ENCODE measurements at regions of chr7 and their contacts with region 1.

Region 1: GRCh38 chr7:101287032-101287431 is 34.6 kb downstream of the IFT22 start:
- DNase-seq: no peak
- H3K4me3 ChIP-seq: no peak overlapping the region
- H3K27ac ChIP-seq: no peak overlapping the region
- H3K4me1 ChIP-seq: peaks cover 0 to 21% (median 8%) of the 10 kb centered on the region in 4 experiments; a peak in 6 of 7 replicates
- H3K27me3 ChIP-seq: no peaks in the 10 kb centered on the region
- CTCF ChIP-seq: no peak
- EP300 ChIP-seq: no peak
- POLR2A ChIP-seq: no peak
- RAD21 ChIP-seq: no peak

Region 2: GRCh38 chr7:101138213-101138870 is 148.7 kb before region 1 on chr7:
- CTCF ChIA-PET with region 1: interaction called, 26 read pairs
- POLR2A ChIA-PET with region 1: no interaction called
- DNase-seq: peak in 1 of 2 experiments; percentile 80
- H3K4me3 ChIP-seq: peak overlapping the region in 1 of 4 experiments; percentile 29; a peak in 2 of 8 replicates
- H3K27ac ChIP-seq: no peak overlapping the region
- H3K4me1 ChIP-seq: peaks cover 2 to 14% (median 6%) of the 10 kb centered on the region in 4 experiments; a peak in 6 of 7 replicates
- H3K27me3 ChIP-seq: peaks cover 0 to 2% (median 0%) of the 10 kb centered on the region in 4 experiments; a peak in 1 of 7 replicates
- CTCF ChIP-seq: peak; percentile 57 to 76 (median 64)
- EP300 ChIP-seq: no peak
- POLR2A ChIP-seq: no peak
- RAD21 ChIP-seq: peak; percentile 60 to 69

Region 3: GRCh38 chr7:101226721-101227120 is 60.3 kb before region 1 on chr7:
- CTCF ChIA-PET with region 1: interaction called, 51 read pairs
- POLR2A ChIA-PET with region 1: no interaction called
- DNase-seq: no peak
- H3K4me3 ChIP-seq: no peak overlapping the region
- H3K27ac ChIP-seq: no peak overlapping the region
- H3K4me1 ChIP-seq: peaks cover 0 to 11% (median 1%) of the 10 kb centered on the region in 4 experiments; a peak in 4 of 7 replicates
- H3K27me3 ChIP-seq: no peaks in the 10 kb centered on the region
- CTCF ChIP-seq: no peak
- EP300 ChIP-seq: no peak
- POLR2A ChIP-seq: no peak
- RAD21 ChIP-seq: no peak

Region 4: GRCh38 chr7:101244375-101245146 is 42.5 kb before region 1 on chr7 and contains the start of gene FIS1:
- CTCF ChIA-PET with region 1: interaction called, 46 read pairs
- POLR2A ChIA-PET with region 1: interaction called, 11 read pairs
- DNase-seq: peak; percentile 76 to 98
- H3K4me3 ChIP-seq: peak within 1 kb of the TSS; percentile 80 to 99 (median 98)
- H3K27ac ChIP-seq: peak within 1 kb of the TSS; percentile 61; the same call in 1 of the 2 replicates
- H3K4me1 ChIP-seq: peaks cover 0 to 6% (median 3%) of the 10 kb centered on the region in 4 experiments; a peak in 5 of 7 replicates
- H3K27me3 ChIP-seq: no peaks in the 10 kb centered on the region
- CTCF ChIP-seq: peak in 2 of 3 experiments; percentile 83 to 91; a peak in 3 of 4 replicates
- EP300 ChIP-seq: no peak
- POLR2A ChIP-seq: no peak
- RAD21 ChIP-seq: peak in 1 of 2 experiments; percentile 54; a peak in 3 of 4 replicates
- total RNA-seq, gene FIS1: 122 and 128 TPM in 2 replicates

Region 5: DNA sequence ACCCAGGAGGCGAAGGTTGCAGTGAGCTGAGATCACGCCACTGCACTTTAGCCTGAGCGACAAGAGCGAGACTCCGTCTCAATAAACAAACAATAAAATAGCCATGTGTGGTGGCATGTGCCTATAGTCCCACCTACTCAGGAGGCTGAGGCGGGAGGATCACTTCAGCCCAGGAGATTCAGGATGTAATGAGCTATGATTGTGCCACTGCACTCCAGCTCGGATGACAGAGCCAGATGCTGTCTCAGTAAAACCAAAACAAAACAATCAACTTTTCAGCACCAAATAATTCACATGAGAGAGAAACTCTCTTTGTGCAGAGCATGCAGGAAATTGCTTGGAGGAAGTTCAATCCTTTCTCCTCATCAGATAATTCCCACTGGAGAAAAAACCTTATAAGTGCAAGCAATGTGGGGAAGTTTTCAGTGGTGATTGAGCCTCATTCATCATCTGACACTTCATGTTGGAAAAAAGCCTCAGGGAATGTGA is 28.7 kb before region 1 on chr7:
- CTCF ChIA-PET with region 1: interaction called, 45 read pairs
- POLR2A ChIA-PET with region 1: interaction called, 4 read pairs
- DNase-seq: no peak
- H3K4me3 ChIP-seq: no peak overlapping the region
- H3K27ac ChIP-seq: no peak overlapping the region
- H3K4me1 ChIP-seq: no peaks in the 10 kb centered on the region
- H3K27me3 ChIP-seq: no peaks in the 10 kb centered on the region; a peak in 1 of 7 replicates
- CTCF ChIP-seq: no peak
- EP300 ChIP-seq: no peak
- POLR2A ChIP-seq: no peak
- RAD21 ChIP-seq: no peak

Region 6: DNA sequence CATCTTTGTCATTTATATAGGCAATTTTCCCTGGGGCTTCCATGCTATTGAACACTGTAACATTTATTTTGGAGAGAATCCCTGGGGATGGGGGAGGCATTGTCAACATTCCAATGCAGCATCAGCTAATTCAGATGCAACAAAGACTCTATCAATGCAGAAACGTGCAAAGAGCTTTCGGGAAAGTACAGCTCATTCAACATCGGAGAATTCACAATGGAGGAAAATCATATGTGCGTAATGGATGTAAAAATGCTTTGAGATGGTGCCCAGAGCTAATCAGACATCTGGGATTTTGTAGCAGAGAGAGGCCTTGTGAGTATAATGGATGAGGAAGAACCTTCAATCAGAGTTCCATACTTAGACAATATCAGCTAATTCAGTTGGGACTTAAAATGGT is 13.8 kb before region 1 on chr7:
- CTCF ChIA-PET with region 1: interaction called, 25 read pairs
- POLR2A ChIA-PET with region 1: interaction called, 13 read pairs
- DNase-seq: no peak
- H3K4me3 ChIP-seq: no peak overlapping the region
- H3K27ac ChIP-seq: no peak overlapping the region
- H3K4me1 ChIP-seq: peaks cover 0 to 10% (median 6%) of the 10 kb centered on the region in 4 experiments; a peak in 3 of 7 replicates
- H3K27me3 ChIP-seq: no peaks in the 10 kb centered on the region
- CTCF ChIP-seq: no peak
- EP300 ChIP-seq: no peak
- POLR2A ChIP-seq: no peak
- RAD21 ChIP-seq: no peak

Region 7: GRCh38 chr7:101357433-101357832 is 70.4 kb after region 1 on chr7:
- CTCF ChIA-PET with region 1: no interaction called
- POLR2A ChIA-PET with region 1: no interaction called
- DNase-seq: no peak
- H3K4me3 ChIP-seq: no peak overlapping the region
- H3K27ac ChIP-seq: no peak overlapping the region
- H3K4me1 ChIP-seq: no peaks in the 10 kb centered on the region
- H3K27me3 ChIP-seq: no peaks in the 10 kb centered on the region; a peak in 1 of 7 replicates
- CTCF ChIP-seq: no peak
- EP300 ChIP-seq: no peak
- POLR2A ChIP-seq: no peak
- RAD21 ChIP-seq: no peak

Region 8: GRCh38 chr7:101410743-101411507 is 123.9 kb after region 1 on chr7:
- CTCF ChIA-PET with region 1: interaction called, 10 read pairs
- POLR2A ChIA-PET with region 1: interaction called, 6 read pairs
- DNase-seq: peak; percentile 83 to 95
- H3K4me3 ChIP-seq: no peak overlapping the region
- H3K27ac ChIP-seq: no peak overlapping the region
- H3K4me1 ChIP-seq: peaks cover 4 to 9% (median 6%) of the 10 kb centered on the region in 4 experiments
- H3K27me3 ChIP-seq: no peaks in the 10 kb centered on the region
- CTCF ChIP-seq: peak; percentile 88 to 99 (median 99)
- EP300 ChIP-seq: no peak
- POLR2A ChIP-seq: no peak
- RAD21 ChIP-seq: peak; percentile 78 to 89